ENCODE measurements at regions of chr3 and their contacts with region 1.

Region 1: DNA sequence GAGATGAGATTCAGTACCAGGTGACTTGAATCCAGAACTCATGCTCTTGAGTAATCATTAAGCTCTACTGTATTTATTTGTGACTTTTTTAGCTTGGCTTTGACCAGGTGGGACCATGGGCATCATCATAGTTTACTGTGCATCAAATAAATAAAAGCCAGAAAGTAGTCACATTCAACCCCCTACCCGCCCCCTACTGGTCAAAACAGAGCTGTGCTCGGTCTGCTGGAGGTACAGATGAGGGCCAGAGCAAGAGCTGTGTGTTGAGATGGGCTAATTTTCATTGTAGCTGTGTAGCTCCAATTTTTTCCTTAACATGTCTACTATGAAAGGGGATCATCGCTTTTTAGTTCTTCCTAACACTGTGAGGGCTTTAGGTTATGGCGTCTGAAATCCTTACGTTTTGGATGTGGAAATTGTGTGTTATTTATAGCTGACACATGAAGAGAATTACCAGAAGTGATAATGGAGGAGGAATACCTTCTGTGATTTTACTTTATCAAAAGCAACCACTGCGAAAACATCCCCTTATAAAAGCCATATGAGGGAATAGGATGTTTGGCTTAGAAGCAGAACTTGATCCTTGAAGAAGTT is 375.1 kb downstream of the PTPRG start:
- DNase-seq: no peak
- ATAC-seq: peak; percentile 79
- H3K4me3 ChIP-seq: no peak overlapping the region
- H3K27ac ChIP-seq: no peak overlapping the region
- H3K4me1 ChIP-seq: no peaks in the 10 kb centered on the region
- H3K27me3 ChIP-seq: no peaks in the 10 kb centered on the region
- CTCF ChIP-seq: peak; percentile 51 to 79 (median 76)
- EP300 ChIP-seq: no peak
- POLR2A ChIP-seq: no peak
- RAD21 ChIP-seq: peak; percentile 55

Region 2: GRCh38 chr3:61750766-61751165 is 185.7 kb before region 1 on chr3:
- CTCF ChIA-PET with region 1: no interaction called
- POLR2A ChIA-PET with region 1: no interaction called
- RAD21 ChIA-PET with region 1: no interaction called
- SMC1A ChIA-PET with region 1: no interaction called
- in situ Hi-C with region 1: no loop called
- intact Hi-C with region 1: no loop called
- DNase-seq: no peak
- ATAC-seq: no peak
- H3K4me3 ChIP-seq: no peak overlapping the region
- H3K27ac ChIP-seq: no peak overlapping the region
- H3K4me1 ChIP-seq: no peaks in the 10 kb centered on the region
- H3K27me3 ChIP-seq: no peaks in the 10 kb centered on the region; a peak in 1 of 4 replicates
- CTCF ChIP-seq: no peak
- EP300 ChIP-seq: no peak
- POLR2A ChIP-seq: no peak
- RAD21 ChIP-seq: no peak

Region 3: GRCh38 chr3:61864886-61865285 is 71.6 kb before region 1 on chr3:
- CTCF ChIA-PET with region 1: interaction called, 66 read pairs
- POLR2A ChIA-PET with region 1: interaction called, 3 read pairs
- RAD21 ChIA-PET with region 1: interaction called, 9 read pairs
- SMC1A ChIA-PET with region 1: interaction called, 135 read pairs
- in situ Hi-C with region 1: no loop called
- intact Hi-C with region 1: no loop called
- DNase-seq: no peak
- ATAC-seq: no peak
- H3K4me3 ChIP-seq: no peak overlapping the region
- H3K27ac ChIP-seq: no peak overlapping the region
- H3K4me1 ChIP-seq: no peaks in the 10 kb centered on the region
- H3K27me3 ChIP-seq: no peaks in the 10 kb centered on the region
- CTCF ChIP-seq: no peak
- EP300 ChIP-seq: no peak
- POLR2A ChIP-seq: no peak
- RAD21 ChIP-seq: no peak

Region 4: DNA sequence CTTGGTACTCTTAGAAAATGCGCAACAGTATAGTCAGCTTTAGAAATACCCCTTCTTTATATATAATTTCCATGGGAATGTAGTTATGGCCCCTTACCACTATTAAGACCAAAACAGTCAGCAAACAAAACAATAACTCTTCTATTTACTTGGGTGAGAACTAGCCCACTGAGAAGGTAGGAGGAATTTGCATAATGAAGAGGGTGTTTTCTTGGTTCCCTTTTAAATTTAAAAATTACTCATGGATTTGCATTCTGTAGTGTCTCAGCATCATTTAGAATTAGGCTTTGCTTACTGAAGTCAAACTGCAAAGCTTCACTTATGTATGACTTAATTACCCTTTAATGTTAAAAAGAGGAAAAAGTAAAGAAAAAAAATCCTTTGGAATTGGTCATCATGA is 24.3 kb before region 1 on chr3:
- CTCF ChIA-PET with region 1: interaction called, 55 read pairs
- POLR2A ChIA-PET with region 1: interaction called, 4 read pairs
- RAD21 ChIA-PET with region 1: interaction called, 32 read pairs
- SMC1A ChIA-PET with region 1: interaction called, 159 read pairs
- in situ Hi-C with region 1: no loop called
- intact Hi-C with region 1: no loop called
- DNase-seq: no peak
- ATAC-seq: peak; percentile 73
- H3K4me3 ChIP-seq: no peak overlapping the region
- H3K27ac ChIP-seq: no peak overlapping the region
- H3K4me1 ChIP-seq: 0 out of 2 replicates have a peak, but pooled peaks cover 4% of the 10 kb centered on the region
- H3K27me3 ChIP-seq: 0 out of 4 replicates have a peak, but pooled peaks cover 0 to 2% of the 10 kb centered on the region in 2 experiments
- CTCF ChIP-seq: no peak
- EP300 ChIP-seq: peak in 1 of 2 experiments; percentile 72; a peak in 1 of 4 replicates
- POLR2A ChIP-seq: no peak
- RAD21 ChIP-seq: no peak

Region 5: DNA sequence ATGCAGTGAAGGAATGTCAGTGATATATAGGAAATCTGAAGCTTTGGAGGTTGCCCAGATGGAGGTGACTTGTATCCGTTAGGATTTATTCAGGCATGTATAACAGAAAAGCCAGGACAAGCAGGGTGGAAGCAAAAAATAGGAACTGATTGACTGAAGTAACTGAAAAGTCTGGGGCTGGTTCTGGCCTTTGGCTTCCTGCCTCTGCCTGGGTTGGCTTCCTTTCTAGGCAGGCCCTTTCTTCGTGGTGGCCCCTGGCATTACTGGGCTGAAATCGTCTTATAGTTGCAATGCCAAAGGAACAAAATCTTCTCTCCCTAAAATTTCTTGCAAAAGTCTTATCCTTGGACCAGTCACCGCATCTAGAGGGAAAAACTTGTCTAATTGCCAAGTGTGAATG is 11.0 kb after region 1 on chr3:
- CTCF ChIA-PET with region 1: interaction called, 52 read pairs
- POLR2A ChIA-PET with region 1: interaction called, 8 read pairs
- RAD21 ChIA-PET with region 1: interaction called, 17 read pairs
- SMC1A ChIA-PET with region 1: interaction called, 39 read pairs
- in situ Hi-C with region 1: no loop called
- intact Hi-C with region 1: no loop called
- DNase-seq: no peak
- ATAC-seq: no peak
- H3K4me3 ChIP-seq: no peak overlapping the region
- H3K27ac ChIP-seq: no peak overlapping the region
- H3K4me1 ChIP-seq: no peaks in the 10 kb centered on the region
- H3K27me3 ChIP-seq: no peaks in the 10 kb centered on the region
- CTCF ChIP-seq: no peak
- EP300 ChIP-seq: no peak
- POLR2A ChIP-seq: no peak
- RAD21 ChIP-seq: no peak

Region 6: DNA sequence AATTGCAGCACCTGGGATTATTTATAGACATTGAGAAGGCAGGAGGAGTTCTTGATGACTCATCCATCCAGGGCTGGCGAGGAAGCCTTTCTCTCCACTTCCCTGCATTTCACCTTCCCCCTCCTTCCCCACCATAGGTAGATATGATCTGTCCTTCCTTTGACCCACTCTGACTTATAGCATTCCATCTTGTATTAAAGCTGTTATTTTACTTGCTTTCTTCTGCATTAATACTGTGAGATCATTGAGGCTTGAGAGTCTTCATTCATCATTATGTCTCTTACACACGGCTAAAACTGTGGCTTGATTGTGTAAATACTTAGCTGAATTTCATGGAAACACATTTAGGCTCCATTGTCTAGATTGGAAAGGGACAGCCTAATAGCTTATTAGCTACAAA is 148.2 kb after region 1 on chr3:
- CTCF ChIA-PET with region 1: no interaction called
- POLR2A ChIA-PET with region 1: no interaction called
- RAD21 ChIA-PET with region 1: no interaction called
- SMC1A ChIA-PET with region 1: no interaction called
- in situ Hi-C with region 1: no loop called
- intact Hi-C with region 1: no loop called
- DNase-seq: no peak
- ATAC-seq: no peak
- H3K4me3 ChIP-seq: no peak overlapping the region
- H3K27ac ChIP-seq: no peak overlapping the region
- H3K4me1 ChIP-seq: no peaks in the 10 kb centered on the region
- H3K27me3 ChIP-seq: 0 out of 4 replicates have a peak, but pooled peaks cover 0 to 2% of the 10 kb centered on the region in 2 experiments
- CTCF ChIP-seq: no peak
- EP300 ChIP-seq: no peak
- POLR2A ChIP-seq: no peak
- RAD21 ChIP-seq: no peak

Measured in GM12878 (cell line).